ENCODE measurements at regions of chr3 and their contacts with region 1.

Region 1: GRCh38 chr3:39208463-39209055 is 16.2 kb upstream of the XIRP1 start:
- DNase-seq: peak; percentile 58
- H3K4me3 Mint-ChIP-seq: no peak overlapping the region
- H3K27ac Mint-ChIP-seq: no peak overlapping the region
- H3K4me1 Mint-ChIP-seq: peaks cover 13% of the 10 kb centered on the region
- H3K27me3 Mint-ChIP-seq: peaks cover 39% of the 10 kb centered on the region

Region 2: GRCh38 chr3:39260957-39261356 is 52.4 kb after region 1 on chr3:
- CTCF ChIA-PET with region 1: interaction called, 13 read pairs
- DNase-seq: peak; percentile 83
- H3K4me3 Mint-ChIP-seq: no peak overlapping the region
- H3K27ac Mint-ChIP-seq: no peak overlapping the region
- H3K4me1 Mint-ChIP-seq: peaks cover 35% of the 10 kb centered on the region
- H3K27me3 Mint-ChIP-seq: peaks cover 58% of the 10 kb centered on the region

Region 3: GRCh38 chr3:39271363-39271914 is 62.9 kb after region 1 on chr3:
- CTCF ChIA-PET with region 1: no interaction called
- DNase-seq: no peak
- H3K4me3 Mint-ChIP-seq: no peak overlapping the region
- H3K27ac Mint-ChIP-seq: no peak overlapping the region
- H3K4me1 Mint-ChIP-seq: peaks cover 47% of the 10 kb centered on the region
- H3K27me3 Mint-ChIP-seq: peaks cover 56% of the 10 kb centered on the region

Region 4: DNA sequence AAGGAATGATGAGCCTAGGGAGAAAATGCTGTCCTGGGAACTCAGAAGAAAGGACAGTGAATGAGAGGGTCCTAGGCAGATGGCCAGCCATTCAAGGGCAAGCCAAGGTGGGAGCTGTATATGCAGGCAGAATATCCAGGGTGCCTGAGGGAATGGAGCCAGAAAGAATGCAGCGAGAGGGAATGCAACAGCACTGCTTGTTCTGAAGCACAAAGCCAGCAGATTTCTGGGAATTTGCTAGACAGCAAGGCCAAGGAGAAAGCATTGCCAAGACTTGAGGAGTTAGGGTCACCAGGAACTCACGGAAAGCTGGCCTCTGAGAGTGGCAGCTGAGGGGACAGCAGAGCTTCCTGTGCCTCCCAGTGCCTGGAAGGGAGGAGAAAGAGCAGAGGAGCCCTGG is 801.4 kb after region 1 on chr3:
- CTCF ChIA-PET with region 1: no interaction called
- DNase-seq: no peak
- H3K4me3 Mint-ChIP-seq: no peak overlapping the region
- H3K27ac Mint-ChIP-seq: no peak overlapping the region
- H3K4me1 Mint-ChIP-seq: no peaks in the 10 kb centered on the region
- H3K27me3 Mint-ChIP-seq: peaks cover 5% of the 10 kb centered on the region

Measured in activated naive CD4-positive, alpha-beta T cell treated with anti-CD3 and anti-CD28 coated beads, Interleukin-2, amount 10 ng/mL, durations not matched to agents 7 days and 5 days (primary cell).